B cell (primary cell): ENCODE measurements at regions of chr11 and their contacts with region 1.

Region 1: DNA sequence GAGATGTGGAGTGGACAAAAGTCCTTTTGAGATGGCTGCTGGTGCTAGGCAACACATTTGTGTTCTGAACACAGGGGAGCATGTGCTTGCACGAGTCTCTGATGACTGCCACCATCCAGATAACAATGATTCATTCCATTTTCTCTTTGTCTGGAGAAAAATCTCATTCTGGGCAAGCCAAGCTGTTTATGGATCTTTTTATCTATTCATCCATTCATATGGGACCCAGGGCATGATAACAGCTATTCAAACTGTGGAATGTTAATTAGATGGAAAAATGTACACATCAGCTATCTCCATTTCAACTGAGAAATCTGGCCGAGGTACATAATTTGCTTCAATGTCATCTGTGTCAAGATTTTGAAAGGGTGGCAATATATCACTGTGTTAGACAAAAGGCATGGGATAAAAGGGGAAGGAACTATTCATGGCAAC is 117.5 kb upstream of the ZBED5 start:
- DNase-seq: no peak
- ATAC-seq: no peak
- H3K4me3 ChIP-seq: no peak overlapping the region
- H3K4me3 Mint-ChIP-seq: no peak overlapping the region
- H3K27ac ChIP-seq: no peak overlapping the region
- H3K27ac Mint-ChIP-seq: no peak overlapping the region
- H3K4me1 ChIP-seq: peaks cover 49% of the 10 kb centered on the region in 2 donors
- H3K4me1 Mint-ChIP-seq: peaks cover 52% of the 10 kb centered on the region
- H3K27me3 ChIP-seq: no peaks in the 10 kb centered on the region
- H3K27me3 Mint-ChIP-seq: no peaks in the 10 kb centered on the region
- CTCF ChIP-seq: no peak

Region 2: GRCh38 chr11:10838083-10838482 is 137.2 kb before region 1 on chr11:
- CTCF ChIA-PET with region 1: no interaction called
- POLR2A ChIA-PET with region 1: no interaction called
- intact Hi-C with region 1: no loop called
- DNase-seq: no peak
- ATAC-seq: no peak
- H3K4me3 ChIP-seq: no peak overlapping the region
- H3K4me3 Mint-ChIP-seq: no peak overlapping the region
- H3K27ac ChIP-seq: no peak overlapping the region
- H3K27ac Mint-ChIP-seq: no peak overlapping the region
- H3K4me1 ChIP-seq: peaks cover 9 to 10% of the 10 kb centered on the region in 2 donors
- H3K4me1 Mint-ChIP-seq: peaks cover 18% of the 10 kb centered on the region
- H3K27me3 ChIP-seq: no peaks in the 10 kb centered on the region
- H3K27me3 Mint-ChIP-seq: no peaks in the 10 kb centered on the region
- CTCF ChIP-seq: no peak

Region 3: GRCh38 chr11:11010624-11011127 is 35.4 kb after region 1 on chr11:
- CTCF ChIA-PET with region 1: interaction called, 5 read pairs
- POLR2A ChIA-PET with region 1: no interaction called
- intact Hi-C with region 1: loop called (anchors 2 kb)
- DNase-seq: peak; percentile 31
- ATAC-seq: no peak
- H3K4me3 ChIP-seq: no peak overlapping the region
- H3K4me3 Mint-ChIP-seq: no peak overlapping the region
- H3K27ac ChIP-seq: no peak overlapping the region
- H3K27ac Mint-ChIP-seq: no peak overlapping the region
- H3K4me1 ChIP-seq: peaks cover 24% of the 10 kb centered on the region in 2 donors
- H3K4me1 Mint-ChIP-seq: peaks cover 23% of the 10 kb centered on the region
- H3K27me3 ChIP-seq: peaks cover 0 to 14% (median 6%) of the 10 kb centered on the region in 4 experiments
- H3K27me3 Mint-ChIP-seq: peaks cover 18% of the 10 kb centered on the region
- CTCF ChIP-seq: no peak